MCF 10A (cell line): ENCODE measurements at regions of chr2 and their contacts with region 1.

Region 1: DNA sequence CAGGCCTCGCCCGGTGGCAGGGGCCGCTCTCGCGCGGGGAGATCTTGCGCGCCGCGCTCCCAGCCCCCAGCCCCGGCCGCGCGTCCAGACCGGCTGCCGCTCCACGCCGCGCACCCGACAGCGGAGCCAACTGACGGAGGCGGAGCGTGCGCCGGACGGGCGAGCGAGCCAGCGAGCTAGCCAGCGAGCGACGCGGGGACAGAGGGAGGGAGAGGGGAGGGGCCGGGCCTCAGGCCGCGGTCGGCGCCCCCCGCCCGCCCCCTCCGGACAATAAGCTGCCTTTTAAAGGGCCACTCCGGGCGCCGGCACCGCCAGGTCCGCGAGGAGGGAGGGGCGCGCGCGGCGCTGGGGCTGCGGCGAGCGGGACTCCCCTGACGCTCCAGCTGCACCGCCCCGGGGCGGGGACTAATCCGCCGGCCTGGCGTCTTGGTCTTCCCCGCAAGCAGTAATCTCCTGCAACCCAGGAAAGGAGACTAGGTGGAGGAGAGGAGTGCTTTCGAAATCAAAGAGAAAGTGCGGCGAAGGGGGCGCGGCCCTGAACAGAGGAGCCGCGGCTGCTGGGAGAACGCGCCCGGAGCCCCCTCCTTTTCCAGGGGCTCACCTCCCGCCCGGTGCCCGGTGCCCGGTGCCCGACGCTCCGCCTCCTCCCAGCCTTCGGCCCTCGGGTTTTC is at the start of gene BIN1:
- DNase-seq: peak; percentile 88
- H3K4me3 Mint-ChIP-seq: peak within 1 kb of the TSS; percentile 80
- H3K27ac Mint-ChIP-seq: no peak within 1 kb of the TSS
- H3K4me1 Mint-ChIP-seq: peaks cover 19% of the 10 kb centered on the region
- H3K27me3 Mint-ChIP-seq: no peaks in the 10 kb centered on the region
- CTCF ChIP-seq: no peak
- total RNA-seq, gene BIN1: 22.4 and 29.6 TPM in 2 replicates

Region 2: GRCh38 chr2:127083819-127084503 is 23.1 kb before region 1 on chr2:
- CTCF ChIA-PET with region 1: no interaction called
- POLR2A ChIA-PET with region 1: interaction called, 6 read pairs
- intact Hi-C with region 1: loop called (anchors 1 kb)
- DNase-seq: peak; percentile 87
- H3K4me3 Mint-ChIP-seq: peak overlapping the region; percentile 43
- H3K27ac Mint-ChIP-seq: peak overlapping the region; percentile 81
- H3K4me1 Mint-ChIP-seq: peaks cover 53% of the 10 kb centered on the region
- H3K27me3 Mint-ChIP-seq: no peaks in the 10 kb centered on the region
- CTCF ChIP-seq: no peak

Region 3: GRCh38 chr2:127743477-127744026 is 636.5 kb after region 1 on chr2:
- CTCF ChIA-PET with region 1: no interaction called
- POLR2A ChIA-PET with region 1: no interaction called
- intact Hi-C with region 1: no loop called
- DNase-seq: no peak
- H3K4me3 Mint-ChIP-seq: no peak overlapping the region
- H3K27ac Mint-ChIP-seq: no peak overlapping the region
- H3K4me1 Mint-ChIP-seq: no peaks in the 10 kb centered on the region
- H3K27me3 Mint-ChIP-seq: no peaks in the 10 kb centered on the region
- CTCF ChIP-seq: no peak